CD8-positive, alpha-beta T cell (primary cell): ENCODE measurements at regions of chr3 and their contacts with region 1.

Region 1: GRCh38 chr3:4759689-4760312 is 219.4 kb upstream of the BHLHE40 start:
- DNase-seq: no peak
- ATAC-seq: no peak
- H3K4me3 ChIP-seq: no peak overlapping the region
- H3K4me3 Mint-ChIP-seq: no peak overlapping the region
- H3K27ac ChIP-seq: no peak overlapping the region
- H3K27ac Mint-ChIP-seq: no peak overlapping the region
- H3K4me1 ChIP-seq: no peaks in the 10 kb centered on the region
- H3K4me1 Mint-ChIP-seq: peaks cover 10% of the 10 kb centered on the region
- H3K27me3 ChIP-seq: no peaks in the 10 kb centered on the region
- H3K27me3 Mint-ChIP-seq: no peaks in the 10 kb centered on the region
- CTCF ChIP-seq: no peak

Region 2: DNA sequence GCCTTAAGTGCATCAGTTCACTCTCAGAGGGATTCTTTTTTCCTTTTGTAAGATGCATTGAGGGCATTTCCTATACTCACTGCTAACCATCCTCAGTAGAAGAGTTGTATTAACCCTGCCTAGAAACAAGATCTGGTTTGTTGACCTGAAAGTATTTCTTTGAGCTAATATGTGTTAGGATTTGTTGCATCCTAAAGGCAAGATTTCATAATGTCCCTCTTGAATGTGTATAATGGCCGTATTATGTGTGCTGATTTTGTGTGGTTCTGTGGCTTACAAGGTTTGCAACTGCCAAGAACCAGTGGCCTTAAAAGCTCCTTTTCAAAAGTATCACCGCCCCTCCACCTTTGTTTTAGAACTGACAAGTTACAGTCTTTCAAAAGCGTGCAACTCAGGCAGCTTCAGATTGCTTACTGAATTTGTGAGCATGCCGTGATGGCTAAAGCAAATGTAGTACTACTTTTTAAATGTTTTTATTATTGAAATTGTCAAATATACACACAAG is 37.5 kb after region 1 on chr3:
- CTCF ChIA-PET with region 1: interaction called, 3 read pairs
- POLR2A ChIA-PET with region 1: no interaction called
- intact Hi-C with region 1: loop called in 1 of 2 experiments (anchors 1 kb)
- DNase-seq: no peak
- ATAC-seq: no peak
- H3K4me3 ChIP-seq: no peak overlapping the region
- H3K4me3 Mint-ChIP-seq: no peak overlapping the region
- H3K27ac ChIP-seq: no peak overlapping the region
- H3K27ac Mint-ChIP-seq: no peak overlapping the region
- H3K4me1 ChIP-seq: no peaks in the 10 kb centered on the region
- H3K4me1 Mint-ChIP-seq: no peaks in the 10 kb centered on the region
- H3K27me3 ChIP-seq: no peaks in the 10 kb centered on the region
- H3K27me3 Mint-ChIP-seq: no peaks in the 10 kb centered on the region
- CTCF ChIP-seq: no peak